ENCODE measurements at regions of chr12 and their contacts with region 1.

Region 1: DNA sequence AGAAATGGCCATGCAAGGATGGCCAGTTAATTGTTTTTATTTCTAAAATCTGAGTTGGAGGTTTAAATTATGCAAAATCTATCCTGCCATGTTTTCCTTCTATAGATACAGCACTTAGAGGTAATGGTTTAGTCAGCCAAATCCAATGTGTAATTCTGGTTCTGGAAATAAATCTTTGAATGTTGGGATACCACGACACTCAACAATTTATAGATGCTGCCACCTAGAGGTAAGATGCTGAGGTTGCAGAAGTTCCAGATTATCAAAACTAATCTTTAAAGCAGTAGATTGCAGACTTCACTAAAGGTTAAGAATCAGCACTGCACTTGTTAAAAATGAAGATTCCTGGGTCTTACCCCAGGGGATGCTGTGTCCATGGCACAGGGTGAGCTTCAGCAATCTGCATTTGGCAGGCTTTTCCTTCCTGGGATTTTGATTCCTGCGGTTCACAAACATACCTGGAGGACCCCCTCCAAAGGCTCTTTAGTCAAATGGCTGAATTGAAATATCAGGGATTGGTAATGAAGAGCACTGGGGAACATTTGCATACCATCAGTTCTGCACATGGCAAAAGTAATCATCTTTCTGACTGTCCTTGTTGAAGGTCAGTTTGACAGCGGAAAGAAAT is 53.4 kb upstream of the ANO4 start:
- DNase-seq: peak; percentile 37
- ATAC-seq: peak; percentile 80
- H3K4me3 ChIP-seq: no peak overlapping the region
- H3K27ac ChIP-seq: no peak overlapping the region
- H3K4me1 ChIP-seq: no peaks in the 10 kb centered on the region; the same call in 1 of the 2 replicates
- H3K27me3 ChIP-seq: no peaks in the 10 kb centered on the region
- CTCF ChIP-seq: peak; percentile 71
- POLR2A ChIP-seq: no peak
- RAD21 ChIP-seq: peak; percentile 51

Region 2: GRCh38 chr12:100668945-100669536 is 72.2 kb before region 1 on chr12:
- CTCF ChIA-PET with region 1: interaction called, 4 read pairs
- POLR2A ChIA-PET with region 1: no interaction called
- dilution Hi-C with region 1: no loop called
- in situ Hi-C with region 1: loop called (anchors 10 kb)
- intact Hi-C with region 1: loop called (anchors 2 kb)
- DNase-seq: peak; percentile 61
- ATAC-seq: peak; percentile 96
- H3K4me3 ChIP-seq: no peak overlapping the region
- H3K27ac ChIP-seq: no peak overlapping the region
- H3K4me1 ChIP-seq: no peaks in the 10 kb centered on the region
- H3K27me3 ChIP-seq: peaks cover 3% of the 10 kb centered on the region
- CTCF ChIP-seq: peak; percentile 83
- POLR2A ChIP-seq: no peak
- RAD21 ChIP-seq: peak; percentile 68

Region 3: GRCh38 chr12:102498471-102498870 is 1757.3 kb after region 1 on chr12:
- CTCF ChIA-PET with region 1: no interaction called
- POLR2A ChIA-PET with region 1: no interaction called
- dilution Hi-C with region 1: no loop called
- in situ Hi-C with region 1: no loop called
- intact Hi-C with region 1: no loop called
- DNase-seq: no peak
- ATAC-seq: no peak
- H3K4me3 ChIP-seq: no peak overlapping the region
- H3K27ac ChIP-seq: no peak overlapping the region
- H3K4me1 ChIP-seq: no peaks in the 10 kb centered on the region
- H3K27me3 ChIP-seq: no peaks in the 10 kb centered on the region
- CTCF ChIP-seq: no peak
- POLR2A ChIP-seq: no peak
- RAD21 ChIP-seq: no peak